B cell (primary cell): ENCODE measurements at regions of chr1 and their contacts with region 1.

Region 1: DNA sequence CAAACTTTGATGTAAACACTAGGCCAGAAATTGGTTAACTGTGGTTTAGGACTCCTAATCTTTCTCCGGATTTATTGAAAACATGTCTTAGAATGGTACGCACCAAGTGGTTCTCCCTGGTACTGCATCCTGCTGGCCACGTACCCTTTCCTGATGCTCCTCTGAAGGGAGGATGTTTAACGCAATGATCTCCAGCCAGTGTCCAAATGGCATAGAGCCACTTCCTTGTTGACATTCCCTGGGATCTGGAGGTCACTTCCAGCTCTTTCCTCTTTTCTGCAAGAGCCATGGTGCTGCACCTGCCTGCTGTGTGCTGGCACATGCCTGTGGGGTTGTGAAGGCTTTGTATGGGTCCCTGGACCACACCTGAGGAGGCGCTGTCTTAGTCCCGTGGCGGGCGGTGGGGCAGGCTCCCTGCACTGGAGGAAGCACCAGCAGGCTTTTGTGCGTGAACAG is 53.9 kb downstream of the GALNT2 start:
- DNase-seq: peak; percentile 49
- ATAC-seq: no peak
- H3K4me3 ChIP-seq: no peak overlapping the region
- H3K4me3 Mint-ChIP-seq: peak overlapping the region; percentile 16
- H3K27ac ChIP-seq: no peak overlapping the region
- H3K27ac Mint-ChIP-seq: no peak overlapping the region
- H3K4me1 ChIP-seq: peaks cover 55 to 75% of the 10 kb centered on the region in 2 donors
- H3K4me1 Mint-ChIP-seq: peaks cover 92% of the 10 kb centered on the region
- H3K27me3 ChIP-seq: no peaks in the 10 kb centered on the region
- H3K27me3 Mint-ChIP-seq: no peaks in the 10 kb centered on the region
- CTCF ChIP-seq: peak; percentile 73

Region 2: GRCh38 chr1:229856009-229856650 is 264.8 kb before region 1 on chr1:
- CTCF ChIA-PET with region 1: no interaction called
- POLR2A ChIA-PET with region 1: no interaction called
- intact Hi-C with region 1: loop called (anchors 5 kb)
- DNase-seq: peak; percentile 82
- ATAC-seq: peak; percentile 99
- H3K4me3 ChIP-seq: peak overlapping the region; percentile 19 to 67 (median 46)
- H3K4me3 Mint-ChIP-seq: peak overlapping the region; percentile 96
- H3K27ac ChIP-seq: peak overlapping the region; percentile 85 to 90
- H3K27ac Mint-ChIP-seq: peak overlapping the region; percentile 97
- H3K4me1 ChIP-seq: peaks cover 34 to 35% of the 10 kb centered on the region in 2 donors
- H3K4me1 Mint-ChIP-seq: peaks cover 29% of the 10 kb centered on the region
- H3K27me3 ChIP-seq: no peaks in the 10 kb centered on the region
- H3K27me3 Mint-ChIP-seq: no peaks in the 10 kb centered on the region
- CTCF ChIP-seq: no peak

Region 3: GRCh38 chr1:230084138-230084880 is 36.6 kb before region 1 on chr1:
- CTCF ChIA-PET with region 1: no interaction called
- POLR2A ChIA-PET with region 1: no interaction called
- intact Hi-C with region 1: no loop called
- DNase-seq: no peak
- ATAC-seq: no peak
- H3K4me3 ChIP-seq: no peak overlapping the region
- H3K4me3 Mint-ChIP-seq: peak overlapping the region; percentile 17
- H3K27ac ChIP-seq: no peak overlapping the region
- H3K27ac Mint-ChIP-seq: peak overlapping the region; percentile 67
- H3K4me1 ChIP-seq: peaks cover 15 to 18% of the 10 kb centered on the region in 2 donors
- H3K4me1 Mint-ChIP-seq: peaks cover 59% of the 10 kb centered on the region
- H3K27me3 ChIP-seq: no peaks in the 10 kb centered on the region
- H3K27me3 Mint-ChIP-seq: no peaks in the 10 kb centered on the region
- CTCF ChIP-seq: no peak

Region 4: DNA sequence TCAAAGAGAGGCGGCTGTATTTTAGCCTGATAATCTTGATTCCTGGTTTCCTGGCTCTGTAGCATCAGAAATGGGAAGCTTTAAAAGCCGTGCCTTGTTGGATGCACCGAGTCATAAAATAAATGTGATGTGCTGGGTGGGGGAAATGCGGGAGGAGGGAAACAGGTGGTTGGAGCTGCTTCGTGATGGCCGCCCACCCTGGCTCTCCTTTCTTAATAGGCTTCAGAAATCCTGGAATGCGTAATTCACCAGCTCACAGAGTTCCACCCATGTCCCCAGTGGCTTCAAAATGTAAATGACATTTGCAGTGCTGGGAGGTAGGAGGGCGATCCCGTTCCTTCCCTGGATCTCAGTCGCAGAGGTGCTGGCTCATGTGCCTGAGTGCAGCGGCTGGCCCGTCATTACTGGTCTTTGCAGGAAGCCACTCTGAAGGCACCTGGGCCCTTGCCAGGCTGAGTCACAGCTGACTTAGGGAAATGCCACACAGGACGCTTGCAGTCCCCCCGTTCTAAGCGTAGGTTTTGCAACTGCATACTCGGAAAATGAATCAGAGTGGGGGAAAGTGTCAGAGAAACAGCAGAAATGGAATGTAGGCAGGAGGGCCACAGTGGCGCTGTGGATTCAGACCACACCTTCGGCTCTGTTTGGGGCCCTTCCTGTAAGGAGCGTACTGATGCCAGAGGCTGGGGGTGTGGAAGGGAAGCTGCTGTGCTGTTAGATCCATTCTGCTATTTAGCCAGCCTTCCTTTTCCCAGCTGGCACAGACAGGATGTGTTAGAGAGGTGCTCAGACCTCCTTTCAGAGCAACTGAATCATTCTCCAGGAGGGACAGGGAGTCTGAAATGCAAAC is 16.3 kb before region 1 on chr1:
- CTCF ChIA-PET with region 1: interaction called, 26 read pairs
- POLR2A ChIA-PET with region 1: interaction called, 10 read pairs
- intact Hi-C with region 1: loop called (anchors 2 kb)
- DNase-seq: peak; percentile 53
- ATAC-seq: peak; percentile 82
- H3K4me3 ChIP-seq: no peak overlapping the region
- H3K4me3 Mint-ChIP-seq: peak overlapping the region; percentile 78
- H3K27ac ChIP-seq: no peak overlapping the region
- H3K27ac Mint-ChIP-seq: peak overlapping the region; percentile 79
- H3K4me1 ChIP-seq: peaks cover 33 to 41% of the 10 kb centered on the region in 2 donors
- H3K4me1 Mint-ChIP-seq: peaks cover 74% of the 10 kb centered on the region
- H3K27me3 ChIP-seq: no peaks in the 10 kb centered on the region
- H3K27me3 Mint-ChIP-seq: no peaks in the 10 kb centered on the region
- CTCF ChIP-seq: no peak

Region 5: GRCh38 chr1:230109895-230110667 is 10.9 kb before region 1 on chr1:
- CTCF ChIA-PET with region 1: interaction called, 26 read pairs
- POLR2A ChIA-PET with region 1: interaction called, 10 read pairs
- intact Hi-C with region 1: loop called (anchors 1 kb)
- DNase-seq: peak; percentile 67
- ATAC-seq: peak; percentile 89
- H3K4me3 ChIP-seq: no peak overlapping the region
- H3K4me3 Mint-ChIP-seq: peak overlapping the region; percentile 74
- H3K27ac ChIP-seq: peak overlapping the region in 1 of 2 donors; percentile 23
- H3K27ac Mint-ChIP-seq: peak overlapping the region; percentile 90
- H3K4me1 ChIP-seq: peaks cover 37 to 53% of the 10 kb centered on the region in 2 donors
- H3K4me1 Mint-ChIP-seq: peaks cover 86% of the 10 kb centered on the region
- H3K27me3 ChIP-seq: no peaks in the 10 kb centered on the region
- H3K27me3 Mint-ChIP-seq: no peaks in the 10 kb centered on the region
- CTCF ChIP-seq: no peak

Region 6: DNA sequence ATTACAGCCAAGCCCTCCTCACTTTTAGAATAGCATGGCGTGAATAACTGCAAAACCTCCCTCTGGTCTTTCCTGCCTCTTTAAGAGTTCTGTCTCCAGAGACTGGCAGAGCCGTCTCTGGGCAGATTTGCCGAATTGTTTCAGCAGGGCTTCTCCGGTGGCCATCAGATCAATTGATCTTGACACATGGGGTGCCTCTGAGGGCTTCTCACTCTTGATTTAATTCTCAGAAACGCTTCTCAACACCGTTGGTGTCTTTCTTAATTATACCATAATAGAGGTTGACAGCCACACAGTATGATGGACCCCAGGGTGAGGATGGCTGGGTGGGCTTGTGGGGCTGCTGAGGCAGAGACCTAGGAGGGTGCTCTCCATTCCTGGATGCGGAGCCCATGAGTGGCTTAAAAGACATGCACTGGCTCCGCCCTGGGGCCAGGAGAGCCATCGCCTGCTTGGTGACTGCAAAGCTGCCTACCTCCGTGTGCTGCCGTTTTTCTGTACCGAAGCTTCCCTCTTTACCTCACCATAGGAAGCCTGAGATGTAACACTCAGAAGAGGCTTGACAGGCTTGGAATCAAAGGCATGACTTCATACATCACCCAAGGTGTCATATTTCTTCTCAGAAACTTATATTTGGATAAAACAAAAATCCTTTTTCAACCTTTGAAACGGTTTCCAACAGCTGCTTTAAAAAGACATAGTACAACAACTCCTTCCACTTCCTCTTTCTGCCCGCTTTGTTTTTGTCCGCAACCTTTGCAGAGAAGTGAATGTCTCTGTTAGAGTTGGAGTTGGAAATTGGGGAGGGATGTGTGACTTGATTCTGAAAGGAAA is 29.0 kb after region 1 on chr1:
- CTCF ChIA-PET with region 1: interaction called, 4 read pairs
- POLR2A ChIA-PET with region 1: interaction called, 18 read pairs
- intact Hi-C with region 1: loop called (anchors 1 kb)
- DNase-seq: peak; percentile 78
- ATAC-seq: peak; percentile 77
- H3K4me3 ChIP-seq: peak overlapping the region; percentile 8 to 64 (median 51)
- H3K4me3 Mint-ChIP-seq: peak overlapping the region; percentile 73
- H3K27ac ChIP-seq: peak overlapping the region; percentile 76 to 94
- H3K27ac Mint-ChIP-seq: peak overlapping the region; percentile 98
- H3K4me1 ChIP-seq: peaks cover 61 to 63% of the 10 kb centered on the region in 2 donors
- H3K4me1 Mint-ChIP-seq: peaks cover 71% of the 10 kb centered on the region
- H3K27me3 ChIP-seq: no peaks in the 10 kb centered on the region
- H3K27me3 Mint-ChIP-seq: no peaks in the 10 kb centered on the region
- CTCF ChIP-seq: no peak

Region 7: GRCh38 chr1:230208619-230209261 is 87.8 kb after region 1 on chr1:
- CTCF ChIA-PET with region 1: no interaction called
- POLR2A ChIA-PET with region 1: no interaction called
- intact Hi-C with region 1: loop called (anchors 5 kb)
- DNase-seq: peak; percentile 59
- ATAC-seq: peak; percentile 53
- H3K4me3 ChIP-seq: no peak overlapping the region
- H3K4me3 Mint-ChIP-seq: peak overlapping the region; percentile 44
- H3K27ac ChIP-seq: peak overlapping the region; percentile 63 to 75
- H3K27ac Mint-ChIP-seq: peak overlapping the region; percentile 96
- H3K4me1 ChIP-seq: peaks cover 58 to 59% of the 10 kb centered on the region in 2 donors
- H3K4me1 Mint-ChIP-seq: peaks cover 70% of the 10 kb centered on the region
- H3K27me3 ChIP-seq: no peaks in the 10 kb centered on the region
- H3K27me3 Mint-ChIP-seq: no peaks in the 10 kb centered on the region
- CTCF ChIP-seq: no peak